Motor neuron (in vitro differentiated cells): ENCODE measurements at regions of chr12 and their contacts with region 1.

Region 1: GRCh38 chr12:117236456-117237001 is 46.3 kb upstream of the FBXO21 start:
- ATAC-seq: peak; percentile 43 to 87 (median 68)
- H3K4me3 ChIP-seq: no peak overlapping the region
- H3K27ac ChIP-seq: no peak overlapping the region
- H3K4me1 ChIP-seq: no peaks in the 10 kb centered on the region

Region 2: DNA sequence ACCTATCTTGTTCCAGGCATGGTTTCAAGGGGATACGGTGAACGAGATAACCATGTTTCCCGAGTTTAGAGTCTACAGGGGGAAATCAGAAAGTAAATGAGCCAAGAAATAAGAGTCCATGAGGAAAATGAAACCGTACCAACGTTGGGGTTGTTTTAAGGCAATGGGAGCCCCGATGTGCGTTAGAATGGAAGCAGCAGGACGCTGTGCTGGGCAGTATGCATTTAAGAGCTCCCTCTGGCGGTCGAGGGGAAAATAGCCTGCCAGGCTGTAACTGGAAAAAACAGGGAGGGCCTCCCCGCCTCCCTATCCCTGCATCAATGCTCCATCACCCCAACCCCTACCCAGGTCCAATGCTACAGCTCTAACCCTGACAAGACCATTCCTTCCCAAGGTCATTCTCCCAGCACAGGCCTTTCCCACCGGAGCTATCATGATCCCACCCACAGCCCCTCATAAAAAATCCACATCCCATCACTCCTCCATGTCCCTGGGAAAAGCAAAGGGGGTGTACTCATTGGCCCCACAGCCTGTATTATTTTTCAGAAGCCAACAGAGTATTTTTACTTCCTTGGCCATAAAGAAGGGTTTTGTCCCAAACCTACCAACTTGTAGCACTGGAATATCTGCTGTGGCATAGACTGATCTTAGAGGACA is 351.2 kb after region 1 on chr12:
- in situ Hi-C with region 1: loop called in 1 of 9 experiments (anchors 25 kb)
- ATAC-seq: peak in 7 of 8 experiments; percentile 24 to 72 (median 31)
- H3K4me3 ChIP-seq: no peak overlapping the region
- H3K27ac ChIP-seq: no peak overlapping the region
- H3K4me1 ChIP-seq: peaks cover 13 to 18% of the 10 kb centered on the region in 2 donors